Endothelial cell of umbilical vein (primary cell): ENCODE measurements at regions of chr20 and their contacts with region 1.

Region 1: DNA sequence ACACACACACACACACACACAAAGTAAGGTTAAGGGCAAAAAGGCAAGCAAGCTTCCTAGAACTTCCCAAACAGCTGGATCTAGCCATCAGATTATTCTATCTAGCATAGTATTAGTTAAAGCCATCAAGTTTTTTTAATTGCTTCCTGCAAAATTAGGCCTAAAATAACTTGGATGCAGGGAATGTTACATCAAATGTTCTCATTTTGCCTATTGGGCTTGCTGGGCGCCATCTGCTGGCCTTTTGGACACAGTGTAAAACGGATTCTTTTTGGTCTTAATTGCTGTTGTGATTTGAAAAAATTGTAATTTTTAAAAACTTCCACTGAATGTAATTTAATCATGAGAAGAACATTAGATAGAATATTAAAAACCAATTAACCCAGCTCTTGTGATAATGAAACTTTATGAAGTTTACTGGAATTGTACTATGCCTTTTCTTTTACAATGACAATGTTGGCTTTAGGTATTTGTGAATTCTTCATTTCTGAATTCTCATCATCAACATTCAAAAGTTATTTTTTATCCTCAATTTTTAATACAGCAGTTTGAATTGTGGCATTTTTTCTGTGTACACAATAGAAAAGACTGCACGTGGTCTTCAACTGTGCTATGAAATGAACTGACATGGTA is 6.8 kb downstream of the MKKS start:
- DNase-seq: peak; percentile 79
- H3K4me3 ChIP-seq: no peak overlapping the region
- H3K27ac ChIP-seq: no peak overlapping the region
- H3K4me1 ChIP-seq: peaks cover 8% of the 10 kb centered on the region
- H3K27me3 ChIP-seq: no peaks in the 10 kb centered on the region
- CTCF ChIP-seq: peak; percentile 66 to 79
- POLR2A ChIP-seq: no peak

Region 2: DNA sequence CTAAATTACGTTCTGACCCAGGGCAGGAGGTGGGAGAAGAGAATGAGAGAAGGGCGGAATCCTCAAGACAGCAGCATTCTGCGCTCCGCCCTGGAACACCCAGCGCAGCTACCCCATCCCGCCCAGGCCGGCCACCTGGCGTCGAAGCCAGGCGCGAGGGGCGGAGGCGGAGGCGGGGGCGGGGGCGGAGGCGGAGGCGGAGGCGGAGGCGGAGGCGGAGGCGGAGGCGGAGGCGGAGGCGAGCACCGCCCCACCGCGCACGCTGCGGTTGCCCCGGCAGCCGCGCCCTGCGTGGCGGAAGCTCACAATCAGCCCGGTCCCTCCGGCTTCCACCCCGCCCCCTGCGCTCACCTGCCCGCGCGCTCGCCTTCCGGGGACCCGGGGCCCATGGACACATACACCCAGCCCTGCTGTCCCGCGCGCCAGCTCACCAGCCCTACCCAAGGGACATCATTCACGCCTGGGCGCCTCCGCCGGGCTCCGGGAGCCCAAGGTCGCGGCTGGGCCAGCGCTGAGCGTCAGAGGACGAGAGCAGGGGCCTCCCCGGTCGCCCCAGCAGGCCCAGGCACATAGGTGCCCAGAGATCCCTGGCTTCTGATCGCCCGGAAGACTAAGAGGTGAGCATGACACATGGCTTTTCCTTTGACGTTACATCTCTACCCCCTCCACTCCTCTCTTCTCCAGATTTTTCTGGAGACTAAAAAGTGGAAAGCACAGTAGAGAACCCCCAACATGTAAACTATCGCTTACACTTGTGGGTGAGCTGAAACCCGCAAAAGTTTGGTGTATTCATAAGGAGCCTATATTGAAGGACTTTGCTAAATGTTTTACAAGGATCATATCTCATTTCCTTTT is 392.2 kb before region 1 on chr20 and contains the start of gene ANKEF1:
- CTCF ChIA-PET with region 1: no interaction called
- POLR2A ChIA-PET with region 1: no interaction called
- dilution Hi-C with region 1: no loop called
- intact Hi-C with region 1: loop called (anchors 5 kb)
- DNase-seq: peak; percentile 64
- H3K4me3 ChIP-seq: peak within 1 kb of the TSS; percentile 48 to 88 (median 60)
- H3K27ac ChIP-seq: peak within 1 kb of the TSS; percentile 58
- H3K4me1 ChIP-seq: peaks cover 5% of the 10 kb centered on the region
- H3K27me3 ChIP-seq: peaks cover 0 to 2% of the 10 kb centered on the region in 2 experiments
- CTCF ChIP-seq: no peak
- POLR2A ChIP-seq: no peak
- total RNA-seq, gene ANKEF1: 1.8 and 2.4 TPM in 2 replicates

Region 3: DNA sequence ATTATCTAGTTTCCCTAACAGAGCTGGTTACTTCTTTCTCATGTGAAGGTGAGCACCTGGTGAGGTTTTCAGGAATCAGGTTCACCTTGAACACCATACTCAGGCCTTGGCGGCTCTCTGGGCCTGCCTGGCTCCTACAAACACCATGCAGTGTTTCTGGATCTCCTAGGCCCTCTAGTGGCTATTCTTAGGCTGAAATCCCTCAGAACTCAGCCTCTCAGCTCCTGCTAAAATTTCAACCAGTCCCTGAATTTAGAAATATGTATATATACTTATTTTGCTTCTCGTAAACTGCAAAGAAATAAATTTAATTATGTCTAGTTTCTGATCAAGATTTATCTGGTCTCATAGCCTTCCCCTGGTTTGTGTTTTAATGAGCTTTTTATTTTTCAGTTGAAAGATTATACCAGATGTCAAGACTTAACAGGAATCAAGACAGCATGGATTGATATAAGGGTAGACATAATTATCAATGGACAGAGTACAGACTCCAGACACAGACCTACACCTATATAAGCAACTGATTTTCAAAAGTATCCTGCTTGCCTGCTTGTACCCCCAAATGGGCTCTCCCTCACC is 336.5 kb before region 1 on chr20:
- CTCF ChIA-PET with region 1: interaction called, 10 read pairs
- POLR2A ChIA-PET with region 1: no interaction called
- dilution Hi-C with region 1: no loop called
- intact Hi-C with region 1: loop called (anchors 2 kb)
- DNase-seq: peak; percentile 67
- H3K4me3 ChIP-seq: no peak overlapping the region
- H3K27ac ChIP-seq: no peak overlapping the region
- H3K4me1 ChIP-seq: no peaks in the 10 kb centered on the region
- H3K27me3 ChIP-seq: no peaks in the 10 kb centered on the region
- CTCF ChIP-seq: peak; percentile 69 to 78
- POLR2A ChIP-seq: no peak

Region 4: GRCh38 chr20:10316582-10316981 is 110.6 kb before region 1 on chr20:
- CTCF ChIA-PET with region 1: interaction called, 24 read pairs
- POLR2A ChIA-PET with region 1: no interaction called
- dilution Hi-C with region 1: no loop called
- intact Hi-C with region 1: loop called (anchors 1 kb)
- DNase-seq: peak; percentile 35
- H3K4me3 ChIP-seq: no peak overlapping the region
- H3K27ac ChIP-seq: no peak overlapping the region
- H3K4me1 ChIP-seq: no peaks in the 10 kb centered on the region
- H3K27me3 ChIP-seq: no peaks in the 10 kb centered on the region
- CTCF ChIP-seq: peak; percentile 14 to 37
- POLR2A ChIP-seq: no peak